PC-3 (cell line): ENCODE measurements at regions of chr1 and their contacts with region 1.

Region 1: GRCh38 chr1:21255278-21255942 is 34.9 kb downstream of the ECE1 start:
- DNase-seq: peak; percentile 92
- ATAC-seq: peak; percentile 60
- H3K4me3 ChIP-seq: no peak overlapping the region
- H3K27ac ChIP-seq: no peak overlapping the region
- H3K4me1 ChIP-seq: peaks cover 21% of the 10 kb centered on the region
- H3K27me3 ChIP-seq: no peaks in the 10 kb centered on the region
- CTCF ChIP-seq: peak; percentile 89

Region 2: GRCh38 chr1:21270086-21270689 is 14.8 kb after region 1 on chr1:
- CTCF ChIA-PET with region 1: interaction called, 10 read pairs
- POLR2A ChIA-PET with region 1: no interaction called
- intact Hi-C with region 1: no loop called
- DNase-seq: peak; percentile 75
- ATAC-seq: peak; percentile 45; the same call in 1 of the 2 replicates
- H3K4me3 ChIP-seq: no peak overlapping the region
- H3K27ac ChIP-seq: no peak overlapping the region
- H3K4me1 ChIP-seq: peaks cover 14% of the 10 kb centered on the region
- H3K27me3 ChIP-seq: no peaks in the 10 kb centered on the region
- CTCF ChIP-seq: peak; percentile 95

Region 3: GRCh38 chr1:21334214-21335087 is 79.0 kb after region 1 on chr1:
- CTCF ChIA-PET with region 1: interaction called, 9 read pairs
- POLR2A ChIA-PET with region 1: interaction called, 10 read pairs
- intact Hi-C with region 1: loop called (anchors 2 kb)
- DNase-seq: peak; percentile 84
- ATAC-seq: peak; percentile 49
- H3K4me3 ChIP-seq: peak overlapping the region; percentile 48; the same call in 1 of the 2 replicates
- H3K27ac ChIP-seq: peak overlapping the region; percentile 91
- H3K4me1 ChIP-seq: peaks cover 71% of the 10 kb centered on the region
- H3K27me3 ChIP-seq: no peaks in the 10 kb centered on the region
- CTCF ChIP-seq: peak; percentile 76